ENCODE measurements at regions of chr5 and their contacts with region 1.

Region 1: DNA sequence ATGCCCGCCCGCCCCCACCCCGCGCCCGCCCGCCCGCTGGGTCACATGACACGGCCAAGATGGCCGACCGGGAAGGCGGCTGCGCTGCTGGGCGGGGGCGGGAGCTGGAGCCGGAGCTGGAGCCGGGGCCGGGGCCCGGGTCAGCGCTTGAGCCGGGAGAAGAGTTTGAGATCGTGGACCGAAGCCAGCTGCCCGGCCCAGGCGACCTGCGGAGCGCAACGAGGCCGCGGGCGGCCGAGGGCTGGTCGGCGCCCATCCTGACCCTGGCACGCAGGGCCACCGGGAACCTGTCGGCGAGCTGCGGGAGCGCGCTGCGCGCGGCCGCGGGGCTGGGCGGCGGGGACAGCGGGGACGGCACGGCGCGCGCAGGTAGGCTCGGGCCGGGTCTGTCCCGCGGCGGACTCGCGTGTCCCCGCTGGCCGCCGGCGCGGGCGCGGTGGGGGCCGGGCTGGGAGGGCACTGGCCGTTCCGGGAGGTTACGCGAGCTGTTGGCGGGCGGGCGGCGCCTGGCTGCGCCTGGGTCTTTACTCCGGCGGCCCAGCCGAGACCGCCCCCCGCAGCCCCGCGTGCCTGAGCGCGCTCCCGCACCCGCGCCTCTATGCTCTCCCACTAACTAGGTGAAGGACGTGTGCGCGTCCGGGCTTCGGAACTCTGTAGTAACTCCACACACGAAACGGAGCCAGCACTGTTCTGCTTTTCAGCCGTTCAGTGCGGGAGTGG is at the start of gene RUFY1:
- DNase-seq: peak; percentile 89
- ATAC-seq: peak; percentile 80
- H3K4me3 Mint-ChIP-seq: peak within 1 kb of the TSS; percentile 96
- H3K27ac Mint-ChIP-seq: peak within 1 kb of the TSS; percentile 99
- H3K4me1 Mint-ChIP-seq: peaks cover 37% of the 10 kb centered on the region
- H3K27me3 Mint-ChIP-seq: no peaks in the 10 kb centered on the region
- total RNA-seq, gene RUFY1: 29.6 to 33.8 TPM

Region 2: GRCh38 chr5:179404321-179405053 is 146.2 kb before region 1 on chr5:
- CTCF ChIA-PET with region 1: no interaction called
- POLR2A ChIA-PET with region 1: no interaction called
- intact Hi-C with region 1: no loop called
- DNase-seq: no peak
- ATAC-seq: no peak
- H3K4me3 Mint-ChIP-seq: no peak overlapping the region
- H3K27ac Mint-ChIP-seq: no peak overlapping the region
- H3K4me1 Mint-ChIP-seq: no peaks in the 10 kb centered on the region
- H3K27me3 Mint-ChIP-seq: no peaks in the 10 kb centered on the region

Region 3: GRCh38 chr5:179648410-179648809 is 97.7 kb after region 1 on chr5:
- CTCF ChIA-PET with region 1: no interaction called
- POLR2A ChIA-PET with region 1: no interaction called
- intact Hi-C with region 1: no loop called
- DNase-seq: no peak
- ATAC-seq: no peak
- H3K4me3 Mint-ChIP-seq: no peak overlapping the region
- H3K27ac Mint-ChIP-seq: no peak overlapping the region
- H3K4me1 Mint-ChIP-seq: no peaks in the 10 kb centered on the region
- H3K27me3 Mint-ChIP-seq: no peaks in the 10 kb centered on the region

Region 4: DNA sequence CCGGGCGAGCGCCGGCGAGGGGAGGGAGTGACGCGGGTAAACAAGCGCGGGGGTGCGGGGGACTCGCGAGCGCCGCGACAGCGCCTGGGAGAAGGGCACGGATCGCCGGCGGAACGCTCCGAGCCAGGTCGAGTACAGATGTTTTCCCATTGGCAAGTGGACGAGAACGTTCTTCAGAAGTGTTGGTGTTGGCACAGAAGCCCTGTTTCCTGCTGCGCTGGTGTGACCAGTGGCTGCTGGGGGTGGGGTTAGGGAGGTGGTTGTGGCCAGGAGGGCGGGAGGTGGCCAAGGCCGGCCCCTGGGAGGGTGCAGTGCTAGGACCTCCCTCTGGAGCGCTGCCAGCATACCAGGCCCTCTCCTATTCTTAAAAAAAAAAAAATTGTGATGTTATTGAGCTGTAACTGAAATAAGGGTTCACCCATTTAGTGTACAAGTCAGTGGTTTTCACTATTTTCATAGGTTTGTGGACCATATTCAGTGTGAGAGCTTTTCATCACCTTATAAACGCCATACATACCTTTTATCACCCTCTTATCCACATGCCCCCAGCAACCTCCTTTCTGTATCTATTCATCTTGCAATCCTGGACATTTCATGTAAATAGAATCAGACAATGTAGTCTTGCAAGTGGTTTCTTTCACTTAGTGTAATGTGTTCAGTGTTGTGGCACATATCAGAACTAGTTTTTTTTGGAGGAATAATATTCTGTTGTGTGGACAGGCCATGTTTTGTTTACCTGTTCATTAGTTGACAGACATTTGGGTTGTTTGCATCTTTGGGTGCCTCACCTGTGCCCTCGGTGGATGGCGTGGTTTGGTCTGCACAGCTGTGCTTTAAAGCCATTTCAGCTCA is 271.1 kb after region 1 on chr5:
- CTCF ChIA-PET with region 1: no interaction called
- POLR2A ChIA-PET with region 1: no interaction called
- intact Hi-C with region 1: loop called in 1 of 2 experiments (anchors 1 kb)
- DNase-seq: peak; percentile 92
- ATAC-seq: peak; percentile 71
- H3K4me3 Mint-ChIP-seq: peak overlapping the region; percentile 92
- H3K27ac Mint-ChIP-seq: peak overlapping the region; percentile 90
- H3K4me1 Mint-ChIP-seq: peaks cover 38% of the 10 kb centered on the region
- H3K27me3 Mint-ChIP-seq: peaks cover 2% of the 10 kb centered on the region

Region 5: DNA sequence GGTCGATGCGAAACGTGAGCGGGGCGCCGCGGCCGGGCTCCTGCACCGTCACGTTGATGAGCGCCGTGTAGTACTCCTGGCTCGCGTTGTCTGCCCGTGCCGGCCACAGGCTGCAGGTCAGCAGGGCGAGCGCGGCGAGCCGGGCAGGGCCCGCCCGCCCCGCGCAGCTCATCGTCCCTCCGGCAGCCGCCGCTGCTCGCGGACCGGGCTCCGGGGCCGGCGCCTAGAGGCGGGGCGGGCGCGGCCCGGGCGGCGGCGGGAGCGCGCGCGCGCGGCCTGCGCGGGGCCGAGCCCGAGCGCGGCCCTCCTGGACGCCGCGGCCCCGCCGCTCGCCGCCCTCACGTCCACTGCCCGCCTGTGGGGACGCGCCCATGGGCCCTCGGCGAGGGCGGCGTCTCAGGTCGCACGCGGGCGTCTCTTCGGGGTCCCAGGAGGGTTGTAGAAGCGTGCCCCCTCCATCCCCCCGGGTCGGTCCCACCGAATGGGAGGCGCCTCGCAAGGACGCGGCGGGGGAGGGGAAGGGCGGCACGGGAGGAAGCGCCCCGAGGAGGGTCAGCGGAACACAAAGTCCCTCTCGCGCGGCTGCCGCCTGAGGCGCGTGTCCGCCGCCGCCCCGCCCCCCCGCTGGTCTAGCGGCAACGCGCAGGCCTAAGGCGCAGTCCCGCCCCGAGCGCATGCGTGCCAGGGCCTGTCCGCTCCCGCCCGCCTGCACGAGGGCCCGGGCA is 521.0 kb after region 1 on chr5 and contains the start of gene RNF130:
- CTCF ChIA-PET with region 1: no interaction called
- POLR2A ChIA-PET with region 1: no interaction called
- intact Hi-C with region 1: loop called in 1 of 2 experiments (anchors 1 kb)
- DNase-seq: peak; percentile 93
- ATAC-seq: peak; percentile 79
- H3K4me3 Mint-ChIP-seq: peak within 1 kb of the TSS; percentile 80
- H3K27ac Mint-ChIP-seq: peak within 1 kb of the TSS; percentile 44
- H3K4me1 Mint-ChIP-seq: peaks cover 29% of the 10 kb centered on the region
- H3K27me3 Mint-ChIP-seq: no peaks in the 10 kb centered on the region
- total RNA-seq, gene RNF130: 10.3 to 13.3 TPM

Measured in activated CD4-positive, alpha-beta T cell treated with anti-CD3 and anti-CD28 coated beads for 36 hours (primary cell).